ENCODE measurements at regions of chr12 and their contacts with region 1.

Region 1: GRCh38 chr12:3777206-3777809 is 24.4 kb upstream of the CRACR2A start:
- DNase-seq: peak; percentile 64
- ATAC-seq: peak; percentile 64
- H3K4me3 ChIP-seq: no peak overlapping the region
- H3K27ac ChIP-seq: no peak overlapping the region
- H3K4me1 ChIP-seq: no peaks in the 10 kb centered on the region
- H3K27me3 ChIP-seq: peaks cover 18% of the 10 kb centered on the region
- CTCF ChIP-seq: peak; percentile 72

Region 2: DNA sequence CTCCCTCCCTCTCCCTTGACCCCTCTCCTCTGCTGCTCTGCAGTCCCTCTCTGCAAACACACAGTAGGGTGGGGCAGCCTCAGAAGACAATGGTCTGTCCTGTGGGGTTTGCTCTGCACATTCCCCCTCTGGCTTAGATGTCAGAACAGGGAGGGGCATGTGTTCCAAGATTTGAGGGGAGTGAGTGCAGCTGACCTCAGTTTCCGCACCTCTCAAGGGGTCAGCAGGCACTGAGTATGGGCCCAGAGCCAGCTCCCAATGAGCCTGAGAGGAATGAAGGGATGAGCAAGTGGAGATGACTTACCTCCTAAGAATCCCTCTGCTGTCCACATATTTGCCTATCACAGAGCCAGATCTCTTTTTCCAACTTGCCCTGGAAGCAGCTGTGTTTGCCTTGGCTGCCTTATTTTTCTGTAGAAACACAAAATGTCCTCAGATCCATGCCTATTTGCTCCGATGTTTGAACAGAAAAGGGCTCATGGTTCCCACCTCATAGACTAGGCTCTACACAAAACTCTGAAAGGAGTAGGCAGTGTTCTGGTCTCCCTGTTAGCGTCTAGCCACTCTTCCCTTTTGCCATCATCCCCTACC is 135.8 kb before region 1 on chr12:
- CTCF ChIA-PET with region 1: no interaction called
- POLR2A ChIA-PET with region 1: no interaction called
- intact Hi-C with region 1: no loop called
- DNase-seq: peak; percentile 78
- ATAC-seq: peak; percentile 35; the same call in 1 of the 2 replicates
- H3K4me3 ChIP-seq: no peak overlapping the region
- H3K27ac ChIP-seq: no peak overlapping the region
- H3K4me1 ChIP-seq: peaks cover 11% of the 10 kb centered on the region
- H3K27me3 ChIP-seq: no peaks in the 10 kb centered on the region
- CTCF ChIP-seq: no peak

Region 3: DNA sequence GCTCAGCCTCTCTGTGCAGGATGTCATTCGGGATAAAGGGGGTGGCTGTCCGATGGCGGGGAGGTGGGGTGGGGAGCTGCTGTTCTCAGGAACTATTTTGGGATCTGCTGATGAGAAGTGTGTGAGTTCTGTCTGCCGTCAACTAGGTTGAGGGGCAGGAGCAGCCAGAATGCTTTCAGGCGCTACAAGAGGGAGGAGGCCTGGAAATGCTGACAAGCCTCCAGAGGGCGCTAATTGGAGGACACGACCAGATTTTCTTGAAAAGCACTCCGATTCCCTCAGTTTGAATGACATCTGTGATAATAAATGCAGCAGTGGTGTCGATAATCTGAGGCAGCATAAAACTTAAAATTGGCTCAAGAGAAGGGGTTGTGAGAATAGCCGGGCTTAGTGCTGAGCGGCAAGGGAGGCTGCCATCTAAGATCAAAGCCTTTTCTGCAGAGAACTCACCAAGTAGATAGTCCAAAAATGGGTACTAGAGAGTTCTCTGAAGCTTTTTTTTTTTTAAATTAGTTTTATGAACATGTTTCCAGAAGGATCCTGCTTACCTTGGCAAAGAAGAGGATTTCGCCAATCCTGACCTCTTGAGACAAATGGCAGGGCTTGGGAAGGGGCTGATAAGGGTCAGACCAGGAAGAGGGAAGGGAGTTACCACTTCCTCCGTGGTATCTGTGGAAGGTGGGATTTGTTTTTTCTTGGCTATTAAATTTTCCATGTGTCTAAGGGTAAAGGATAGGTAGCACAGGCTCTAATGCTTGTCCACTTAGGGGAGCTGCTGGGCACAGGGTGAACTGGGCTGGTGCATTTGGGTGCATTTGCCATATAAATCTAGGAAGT is 118.8 kb before region 1 on chr12:
- CTCF ChIA-PET with region 1: no interaction called
- POLR2A ChIA-PET with region 1: no interaction called
- intact Hi-C with region 1: loop called (anchors 5 kb)
- DNase-seq: peak; percentile 41
- ATAC-seq: no peak; the same call in 1 of the 2 replicates
- H3K4me3 ChIP-seq: no peak overlapping the region
- H3K27ac ChIP-seq: no peak overlapping the region
- H3K4me1 ChIP-seq: peaks cover 4% of the 10 kb centered on the region; the same call in 1 of the 2 replicates
- H3K27me3 ChIP-seq: 0 out of 2 replicates have a peak, but pooled peaks cover 3% of the 10 kb centered on the region
- CTCF ChIP-seq: peak; percentile 64

Region 4: DNA sequence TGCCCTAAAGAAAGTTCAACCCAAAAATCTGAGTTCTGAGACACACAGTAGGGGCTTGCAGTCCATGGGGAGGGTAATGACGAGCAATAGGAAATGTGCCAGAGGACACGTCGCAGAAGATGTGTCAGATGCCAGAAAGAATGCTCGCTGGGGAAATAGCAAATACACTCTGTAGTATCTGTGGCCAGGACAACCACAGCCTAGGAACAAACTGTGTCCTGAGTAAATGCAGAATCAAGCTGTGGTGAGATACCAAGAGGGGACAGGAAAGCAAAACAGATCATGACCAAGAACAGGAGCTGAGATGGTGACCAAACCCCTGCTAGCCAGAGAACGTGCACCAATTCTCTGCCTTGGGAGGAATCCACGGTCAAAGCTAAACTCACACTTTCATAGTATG is 33.5 kb before region 1 on chr12:
- CTCF ChIA-PET with region 1: no interaction called
- POLR2A ChIA-PET with region 1: no interaction called
- intact Hi-C with region 1: no loop called
- DNase-seq: no peak
- ATAC-seq: no peak
- H3K4me3 ChIP-seq: no peak overlapping the region
- H3K27ac ChIP-seq: no peak overlapping the region
- H3K4me1 ChIP-seq: no peaks in the 10 kb centered on the region; the same call in 1 of the 2 replicates
- H3K27me3 ChIP-seq: peaks cover 12% of the 10 kb centered on the region; the same call in 1 of the 2 replicates
- CTCF ChIP-seq: no peak